ENCODE measurements at regions of chr22 and their contacts with region 1.

Region 1: DNA sequence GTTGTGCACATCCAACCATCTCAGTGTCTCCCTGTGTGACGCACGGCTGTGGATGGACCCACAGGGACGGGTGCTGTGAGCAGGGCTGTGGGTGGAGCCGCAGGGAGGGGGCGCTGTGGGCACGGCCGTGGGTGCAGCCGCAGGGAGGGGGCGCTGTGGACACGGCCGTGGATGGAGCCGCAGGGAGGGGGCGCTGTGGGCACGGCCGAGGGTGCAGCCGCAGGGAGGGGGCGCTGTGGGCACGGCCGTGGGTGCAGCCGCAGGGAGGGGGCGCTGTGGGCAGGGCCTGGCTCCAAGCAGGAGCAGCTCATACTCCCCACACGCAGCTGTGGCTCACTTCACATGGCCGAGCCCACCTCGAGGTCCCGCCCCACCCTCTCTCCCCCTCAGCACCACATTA is 6.0 kb upstream of the MAPK11 start:
- DNase-seq: peak; percentile 90

Region 2: GRCh38 chr22:49628391-49629260 is 647.5 kb before region 1 on chr22:
- intact Hi-C with region 1: no loop called
- DNase-seq: peak; percentile 76

Region 3: GRCh38 chr22:50326959-50327710 is 51.0 kb after region 1 on chr22 and contains the start of gene DENND6B:
- intact Hi-C with region 1: loop called (anchors 5 kb)
- DNase-seq: peak; percentile 94
- total RNA-seq, gene DENND6B: 2.1 to 2.5 TPM

Measured in posterior vena cava (tissue), 2 donors.